Aorta (tissue), 5 donors: ENCODE measurements at regions of chr2 and their contacts with region 1.

Region 1: GRCh38 chr2:174593574-174594203 is 3.9 kb downstream of the WIPF1 start:
- DNase-seq: no peak
- ATAC-seq: peak; percentile 56
- H3K4me3 ChIP-seq: peak overlapping the region in 1 of 2 donors; percentile 26
- H3K27ac ChIP-seq: peak overlapping the region in 1 of 2 donors; percentile 67
- H3K4me1 ChIP-seq: peaks cover 7 to 16% of the 10 kb centered on the region in 2 donors
- H3K27me3 ChIP-seq: no peaks in the 10 kb centered on the region

Region 2: DNA sequence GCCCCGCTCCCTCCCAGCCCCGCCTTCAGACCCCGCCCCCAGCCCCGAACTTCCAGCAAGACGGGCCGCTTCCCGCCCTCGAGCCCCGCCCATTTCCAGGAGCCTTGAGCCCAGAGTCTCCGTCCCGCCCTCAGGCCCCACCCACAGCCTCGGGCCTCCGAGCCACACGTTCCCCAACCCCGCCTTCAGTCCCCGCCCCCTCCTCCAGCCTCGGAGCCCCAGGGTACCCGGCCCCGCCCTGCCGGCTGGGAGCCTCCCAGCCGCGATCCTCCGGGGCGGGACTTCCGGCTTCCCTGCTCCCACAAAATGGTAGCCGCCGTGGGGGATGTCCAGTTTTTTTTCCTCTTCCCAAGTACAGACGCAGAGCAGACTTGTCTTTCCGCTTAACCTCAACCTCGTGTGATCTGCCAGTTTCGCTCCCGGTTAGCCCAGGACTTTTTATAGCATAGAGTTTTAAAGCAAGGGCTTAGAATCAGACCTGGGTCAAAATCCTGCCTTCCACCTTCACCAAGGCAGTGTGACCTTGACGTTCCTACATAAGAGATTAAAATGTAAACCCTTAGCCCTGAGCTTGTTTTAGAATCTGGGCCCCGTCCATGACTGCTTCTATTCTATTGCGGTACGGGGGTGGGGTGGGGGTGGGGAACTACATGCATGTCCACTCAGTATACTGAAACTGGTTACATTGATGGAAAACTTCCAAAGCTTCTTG is 106.4 kb before region 1 on chr2:
- intact Hi-C with region 1: loop called in 1 of 2 experiments (anchors 10 kb)
- DNase-seq: peak; percentile 100
- ATAC-seq: peak; percentile 99
- H3K4me3 ChIP-seq: peak overlapping the region; percentile 60 to 96
- H3K27ac ChIP-seq: peak overlapping the region in 1 of 2 donors; percentile 69
- H3K4me1 ChIP-seq: no peaks in the 10 kb centered on the region
- H3K27me3 ChIP-seq: no peaks in the 10 kb centered on the region

Region 3: GRCh38 chr2:174748948-174749347 is 155.3 kb after region 1 on chr2:
- intact Hi-C with region 1: no loop called
- DNase-seq: peak in 1 of 2 donors; percentile 65
- ATAC-seq: peak; percentile 78
- H3K4me3 ChIP-seq: no peak overlapping the region
- H3K27ac ChIP-seq: no peak overlapping the region
- H3K4me1 ChIP-seq: no peaks in the 10 kb centered on the region
- H3K27me3 ChIP-seq: no peaks in the 10 kb centered on the region